T-cell (primary cell): ENCODE measurements at regions of chr1 and their contacts with region 1.

Region 1: DNA sequence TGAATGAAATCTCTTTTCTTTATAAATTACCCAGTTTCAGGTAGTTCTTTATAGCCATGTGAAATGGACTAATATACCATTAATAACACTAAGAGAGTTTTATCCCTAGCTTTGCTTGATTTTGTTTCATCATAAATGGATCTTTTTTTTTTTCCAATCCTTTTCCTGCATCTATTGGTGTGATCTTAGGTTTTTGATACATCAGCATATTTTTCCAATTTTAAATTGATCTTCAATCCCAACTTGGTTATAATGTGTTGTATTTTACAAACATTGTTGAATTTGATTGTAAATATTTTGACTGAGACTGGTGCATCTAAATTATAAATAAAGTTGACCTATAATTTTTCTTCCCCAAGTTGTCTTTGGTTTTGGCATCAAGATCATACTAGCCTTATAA is 4.3 kb upstream of the RTCA start:
- DNase-seq: no peak
- ATAC-seq: no peak
- H3K4me3 ChIP-seq: no peak overlapping the region
- H3K4me3 Mint-ChIP-seq: no peak overlapping the region
- H3K27ac ChIP-seq: no peak overlapping the region
- H3K27ac Mint-ChIP-seq: no peak overlapping the region
- H3K4me1 ChIP-seq: peaks cover 2 to 9% of the 10 kb centered on the region in 2 experiments
- H3K4me1 Mint-ChIP-seq: peaks cover 12 to 24% (median 17%) of the 10 kb centered on the region in 3 donors
- H3K27me3 ChIP-seq: no peaks in the 10 kb centered on the region
- H3K27me3 Mint-ChIP-seq: no peaks in the 10 kb centered on the region

Region 2: DNA sequence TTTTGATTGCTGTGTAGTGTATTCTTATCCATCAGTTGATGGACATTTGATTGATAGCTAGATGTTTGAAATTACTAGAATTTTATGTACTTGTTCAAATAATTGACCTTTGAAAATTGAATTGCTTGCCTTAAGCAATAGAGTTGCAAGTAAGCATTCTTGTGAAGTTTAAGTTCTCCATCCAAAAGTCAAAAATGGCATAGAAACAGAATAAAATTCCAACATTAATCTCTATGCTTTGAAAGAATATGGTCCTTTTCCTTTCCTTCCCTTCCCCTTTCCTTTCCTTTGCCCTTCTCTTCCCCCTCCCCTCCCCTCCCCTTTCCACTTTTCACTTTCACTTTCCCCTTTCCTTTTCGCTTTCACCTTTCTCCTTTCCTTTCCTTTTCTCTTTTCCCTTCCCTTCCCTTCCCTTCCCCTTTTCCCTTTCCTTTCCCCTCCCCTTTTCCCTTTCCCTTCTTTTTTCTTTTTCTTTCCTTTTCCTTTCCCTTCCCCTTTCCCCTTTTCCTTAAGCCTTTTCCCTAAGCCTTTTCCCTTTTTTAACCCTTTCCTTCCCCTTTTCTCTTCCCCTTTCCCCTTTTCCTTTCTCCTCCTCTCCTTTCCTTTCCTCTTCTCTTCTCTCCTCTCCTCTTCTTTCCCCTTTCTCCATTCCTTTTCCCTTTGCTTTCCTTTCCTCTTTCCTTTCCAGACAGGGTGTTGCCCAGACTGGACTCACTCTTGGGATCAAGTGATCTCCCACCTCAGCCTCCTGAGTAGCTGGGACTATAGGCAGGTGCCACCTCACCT is 196.3 kb before region 1 on chr1:
- CTCF ChIA-PET with region 1: interaction called in 1 of 2 experiments, 12 read pairs
- POLR2A ChIA-PET with region 1: no interaction called
- DNase-seq: peak in 1 of 35 experiments; percentile 11
- ATAC-seq: no peak
- H3K4me3 ChIP-seq: no peak overlapping the region
- H3K4me3 Mint-ChIP-seq: peak overlapping the region in 1 of 3 donors; percentile 42
- H3K27ac ChIP-seq: peak overlapping the region; percentile 26
- H3K27ac Mint-ChIP-seq: peak overlapping the region; percentile 77 to 82
- H3K4me1 ChIP-seq: peaks cover under 1 to 5% of the 10 kb centered on the region in 2 experiments
- H3K4me1 Mint-ChIP-seq: peaks cover 21 to 34% (median 23%) of the 10 kb centered on the region in 3 donors
- H3K27me3 ChIP-seq: no peaks in the 10 kb centered on the region
- H3K27me3 Mint-ChIP-seq: no peaks in the 10 kb centered on the region

Region 3: GRCh38 chr1:100087396-100087795 is 174.3 kb before region 1 on chr1:
- CTCF ChIA-PET with region 1: no interaction called
- POLR2A ChIA-PET with region 1: no interaction called
- DNase-seq: no peak
- ATAC-seq: no peak
- H3K4me3 ChIP-seq: no peak overlapping the region
- H3K4me3 Mint-ChIP-seq: no peak overlapping the region
- H3K27ac ChIP-seq: no peak overlapping the region
- H3K27ac Mint-ChIP-seq: no peak overlapping the region
- H3K4me1 ChIP-seq: no peaks in the 10 kb centered on the region
- H3K4me1 Mint-ChIP-seq: no peaks in the 10 kb centered on the region
- H3K27me3 ChIP-seq: no peaks in the 10 kb centered on the region
- H3K27me3 Mint-ChIP-seq: no peaks in the 10 kb centered on the region